ENCODE measurements at regions of chr3 and their contacts with region 1.

Region 1: GRCh38 chr3:172595641-172596393 is 72.6 kb upstream of the TNFSF10 start:
- DNase-seq: no peak

Region 2: GRCh38 chr3:172201136-172201869 is 394.5 kb before region 1 on chr3:
- intact Hi-C with region 1: no loop called
- DNase-seq: peak; percentile 90

Region 3: DNA sequence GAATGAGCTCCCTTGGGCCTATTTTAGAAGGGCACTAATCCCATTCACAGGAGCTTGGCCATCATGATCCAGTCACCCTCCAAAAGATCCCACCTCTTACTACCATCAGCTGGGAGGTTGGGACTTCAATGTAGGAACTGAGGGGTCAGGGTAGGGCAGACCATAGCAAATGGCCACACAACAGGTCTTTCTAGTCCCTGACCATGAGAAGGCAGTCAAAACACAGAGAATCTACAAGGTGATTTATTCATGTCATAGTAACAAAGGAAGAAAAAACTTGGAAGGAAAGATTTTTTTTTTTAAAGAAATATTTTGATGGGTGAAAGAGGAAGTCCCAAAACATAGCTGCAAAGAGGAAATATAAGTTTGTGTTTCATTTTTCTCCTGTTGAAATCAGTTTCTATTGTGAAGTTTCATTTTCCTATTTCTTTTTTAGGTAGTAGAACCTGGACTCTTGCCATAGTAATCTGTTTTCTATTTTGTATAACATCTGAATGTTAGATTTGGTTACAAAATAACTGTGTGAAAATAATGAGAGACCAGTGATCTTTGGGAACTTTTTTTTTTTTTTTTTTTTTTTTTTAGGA is 49.1 kb before region 1 on chr3:
- intact Hi-C with region 1: loop called (anchors 10 kb)
- DNase-seq: no peak